KBM-7 (cell line): ENCODE measurements at regions of chr3 and their contacts with region 1.

Region 1: GRCh38 chr3:179562591-179563270 is at the start of gene ACTL6A:
- DNase-seq: peak; percentile 100

Region 2: GRCh38 chr3:179166561-179167201 is 396.1 kb before region 1 on chr3:
- in situ Hi-C with region 1: no loop called
- DNase-seq: no peak

Region 3: DNA sequence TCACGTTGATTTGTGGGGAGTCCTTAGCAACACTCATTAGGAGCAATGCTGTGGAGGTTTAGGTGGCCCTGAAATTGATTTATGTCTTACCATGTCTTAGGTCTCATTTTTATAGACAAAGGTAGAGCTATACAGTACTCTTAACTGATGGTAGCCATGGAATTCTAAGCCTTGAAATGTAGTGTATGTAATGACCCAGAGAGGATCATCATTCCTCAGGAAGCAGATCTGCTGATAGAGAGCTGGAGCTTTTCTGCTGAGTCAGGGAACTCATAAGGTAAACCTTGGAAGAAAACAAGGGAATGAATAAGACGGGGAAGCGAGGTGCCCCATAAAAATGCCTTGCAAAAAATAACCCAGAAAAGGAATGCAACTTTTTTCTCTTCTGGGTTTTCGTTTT is 273.9 kb before region 1 on chr3:
- in situ Hi-C with region 1: no loop called
- DNase-seq: no peak

Region 4: DNA sequence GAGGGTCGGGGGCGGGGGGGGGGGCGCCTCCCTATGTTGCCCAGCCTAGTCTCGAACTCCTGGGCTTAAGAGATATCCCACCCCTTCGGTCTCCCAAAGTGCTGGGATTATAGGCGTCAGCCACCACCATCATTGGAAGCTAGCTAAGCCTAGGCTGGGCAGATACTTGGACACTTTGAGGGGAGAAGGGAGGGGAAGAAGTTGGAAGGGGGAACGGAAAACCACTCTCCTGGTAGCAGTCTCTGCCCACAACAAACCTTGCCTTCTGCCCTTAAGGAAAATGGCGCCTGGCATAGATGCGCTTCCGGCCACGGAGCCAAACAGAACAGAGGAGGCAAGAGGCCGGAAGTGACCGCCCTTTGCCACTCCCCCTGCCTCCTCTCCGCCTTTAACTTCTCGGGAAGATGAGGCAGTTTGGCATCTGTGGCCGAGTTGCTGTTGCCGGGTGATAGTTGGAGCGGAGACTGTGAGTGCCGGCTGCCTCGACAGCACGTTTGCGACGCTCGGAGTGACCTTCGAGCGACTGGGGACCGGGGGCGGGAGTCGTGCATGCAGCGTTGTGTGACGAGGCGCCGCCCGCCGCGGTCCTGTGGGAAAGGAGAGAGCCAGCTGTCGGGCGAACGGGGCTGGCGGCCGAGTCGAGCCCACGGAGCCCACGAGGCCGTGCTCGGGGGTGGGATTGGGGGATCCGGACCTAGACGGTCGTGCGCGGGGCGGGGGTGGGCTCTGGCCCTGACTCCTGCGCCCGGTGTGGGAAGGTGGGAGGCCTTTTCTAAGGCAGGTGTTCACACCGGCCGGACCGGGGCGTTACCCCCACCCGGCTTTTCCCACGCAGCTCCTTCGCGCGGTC is 215.2 kb before region 1 on chr3 and contains the start of gene MFN1:
- in situ Hi-C with region 1: loop called (anchors 25 kb)
- DNase-seq: peak; percentile 97

Region 5: DNA sequence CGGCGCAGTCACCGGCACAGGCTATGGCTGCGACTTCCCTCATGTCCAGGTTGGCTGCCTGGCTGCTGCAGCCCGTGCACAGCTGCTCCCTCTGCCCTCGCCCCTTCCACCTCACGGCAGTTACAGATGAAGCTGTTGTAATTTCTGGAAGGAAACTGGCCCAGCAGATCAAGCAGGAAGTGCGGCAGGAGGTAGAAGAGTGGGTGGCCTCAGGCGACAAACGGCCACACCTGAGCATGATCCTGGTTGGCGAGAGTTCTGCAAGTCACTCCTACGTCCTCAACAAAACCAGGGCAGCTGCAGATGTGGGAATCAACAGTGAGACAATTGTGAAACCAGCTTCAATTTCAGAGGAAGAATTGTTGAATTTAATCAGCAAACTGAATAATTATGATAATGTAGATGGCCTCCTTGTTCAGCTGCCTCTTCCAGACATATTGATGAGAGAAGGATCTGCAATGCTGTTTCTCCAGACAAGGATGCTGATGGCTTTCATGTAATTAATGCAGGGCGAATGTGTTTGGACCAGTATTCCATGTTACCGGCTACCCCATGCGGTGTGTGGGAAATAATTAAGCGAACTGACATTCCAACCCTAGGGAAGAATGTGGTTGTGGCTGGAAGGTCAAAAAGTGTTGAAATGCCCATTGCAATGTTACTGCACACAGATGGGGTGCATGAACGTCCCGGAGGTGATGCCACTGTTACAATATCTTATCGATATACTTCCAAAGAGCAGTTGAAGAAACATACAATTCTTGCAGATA is 98.2 kb before region 1 on chr3:
- in situ Hi-C with region 1: no loop called
- DNase-seq: peak; percentile 63